Activated CD4-positive, alpha-beta T cell treated with anti-CD3 and anti-CD28 coated beads for 36 hours (primary cell): ENCODE measurements at regions of chr19 and their contacts with region 1.

Region 1: DNA sequence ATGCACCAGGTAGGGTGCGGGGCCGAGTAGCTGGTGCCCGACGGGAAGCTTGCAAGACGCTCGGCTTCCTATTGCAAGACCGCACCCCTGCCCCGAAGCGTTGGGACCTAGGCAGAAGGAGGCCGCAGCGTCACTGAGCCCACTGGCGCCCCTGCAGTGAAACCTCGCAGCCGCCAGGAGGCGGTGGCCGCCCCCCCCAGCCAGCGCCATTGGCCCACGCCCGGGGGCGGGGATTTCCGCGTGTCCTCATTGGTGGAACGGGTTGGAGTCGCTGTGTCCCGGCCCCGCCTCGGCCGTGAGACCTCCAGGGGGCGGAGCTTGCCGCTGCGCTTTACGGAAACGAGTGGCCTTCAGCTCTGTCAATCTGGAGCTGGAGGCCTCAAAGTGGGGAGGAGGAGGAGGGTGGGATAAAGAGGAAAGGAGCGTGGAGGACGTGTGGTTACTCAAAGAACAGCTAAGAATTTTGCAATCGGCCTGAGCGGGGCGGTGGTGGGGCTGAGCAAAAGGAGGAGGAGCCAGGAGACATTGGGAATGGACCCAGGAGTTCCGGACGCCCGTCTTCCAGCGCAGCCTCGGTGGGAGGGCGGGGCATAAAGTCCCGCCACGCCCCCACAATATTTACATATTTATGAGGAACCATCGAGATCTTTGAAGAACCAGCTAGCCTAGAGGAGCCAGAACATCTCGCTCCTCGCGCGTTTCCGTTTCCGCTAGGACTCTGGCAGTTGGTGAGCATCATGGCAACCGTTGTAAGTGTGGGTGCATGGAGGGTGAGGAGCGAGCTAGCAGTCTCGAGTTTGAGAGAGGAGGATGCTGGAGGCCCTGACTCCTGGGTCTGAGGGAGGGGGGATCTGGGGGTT is at the starts of genes GYS1 and RUVBL2:
- DNase-seq: peak; percentile 100
- ATAC-seq: peak; percentile 95
- H3K4me3 Mint-ChIP-seq: peak within 1 kb of the TSS; percentile 100
- H3K27ac Mint-ChIP-seq: peak within 1 kb of the TSS; percentile 97
- H3K4me1 Mint-ChIP-seq: peaks cover 41% of the 10 kb centered on the region
- H3K27me3 Mint-ChIP-seq: no peaks in the 10 kb centered on the region
- total RNA-seq, gene GYS1: 80.2 to 102 TPM
- total RNA-seq, gene RUVBL2: 155 to 178 TPM

Region 2: GRCh38 chr19:47848823-47849473 is 1144.5 kb before region 1 on chr19:
- CTCF ChIA-PET with region 1: no interaction called
- POLR2A ChIA-PET with region 1: no interaction called
- intact Hi-C with region 1: no loop called
- DNase-seq: peak; percentile 79
- ATAC-seq: peak; percentile 19
- H3K4me3 Mint-ChIP-seq: peak overlapping the region; percentile 47
- H3K27ac Mint-ChIP-seq: no peak overlapping the region
- H3K4me1 Mint-ChIP-seq: peaks cover 8% of the 10 kb centered on the region
- H3K27me3 Mint-ChIP-seq: peaks cover 40% of the 10 kb centered on the region

Region 3: DNA sequence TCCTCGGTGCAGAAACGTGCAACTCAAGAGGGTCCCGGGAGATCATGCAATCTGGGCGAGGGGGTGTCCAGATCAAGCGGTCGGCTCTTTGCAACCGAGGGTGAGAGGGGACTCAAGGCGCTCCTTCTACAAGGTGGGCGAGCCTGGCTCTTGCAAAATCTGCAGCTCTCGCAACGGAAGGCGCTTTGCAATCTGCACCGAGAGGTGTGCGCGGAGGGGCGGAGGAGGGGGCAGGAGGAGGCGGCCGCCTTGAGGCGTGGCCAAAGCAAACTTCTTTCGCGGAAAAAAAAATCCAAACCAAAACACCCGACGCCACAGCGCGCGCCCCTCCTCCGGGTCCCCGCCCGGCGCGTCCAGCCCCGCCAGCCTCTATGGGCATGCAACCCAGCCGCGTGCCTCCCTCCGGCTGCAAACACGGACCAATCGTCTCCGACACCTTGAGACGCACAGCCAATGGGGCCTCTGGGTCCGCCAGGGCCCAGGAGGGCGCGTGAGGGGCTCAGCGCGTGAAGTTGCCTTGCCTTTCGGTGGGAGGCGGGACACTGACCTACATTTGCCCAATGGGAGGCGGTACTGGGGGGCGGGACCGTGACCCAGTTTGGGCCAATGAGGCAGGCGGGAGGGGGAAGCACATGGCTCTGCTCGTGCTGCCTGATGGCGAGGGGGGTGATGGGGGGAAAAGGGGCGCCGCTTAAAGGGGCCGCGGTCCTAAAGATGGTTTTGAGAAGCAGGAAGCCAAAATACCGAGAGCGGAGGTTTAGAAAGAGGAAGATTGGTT is 356.0 kb before region 1 on chr19 and contains the start of gene DBP:
- CTCF ChIA-PET with region 1: no interaction called
- POLR2A ChIA-PET with region 1: no interaction called
- intact Hi-C with region 1: loop called in 1 of 2 experiments (anchors 1 kb)
- DNase-seq: peak; percentile 98
- ATAC-seq: peak; percentile 75
- H3K4me3 Mint-ChIP-seq: peak within 1 kb of the TSS; percentile 83
- H3K27ac Mint-ChIP-seq: peak within 1 kb of the TSS; percentile 99
- H3K4me1 Mint-ChIP-seq: peaks cover 55% of the 10 kb centered on the region
- H3K27me3 Mint-ChIP-seq: no peaks in the 10 kb centered on the region
- total RNA-seq, gene DBP: 8.3 to 12.4 TPM

Region 4: DNA sequence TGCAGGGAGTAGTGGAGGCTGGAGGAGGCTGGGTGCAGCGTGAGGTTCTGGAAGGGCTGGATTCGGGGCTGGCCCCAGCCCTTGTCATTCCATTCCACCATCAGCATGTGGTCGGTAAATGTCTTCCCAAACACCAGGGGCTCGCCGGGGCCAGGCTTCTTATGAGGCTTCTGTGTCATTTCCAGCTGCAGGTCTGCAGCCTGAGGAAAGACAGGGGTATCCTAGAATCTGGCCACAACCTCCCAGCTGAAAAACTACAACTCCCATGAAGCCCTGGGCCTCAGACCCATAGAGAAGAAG is 186.9 kb before region 1 on chr19:
- CTCF ChIA-PET with region 1: interaction called, 4 read pairs
- POLR2A ChIA-PET with region 1: interaction called, 6 read pairs
- intact Hi-C with region 1: loop called in 1 of 2 experiments (anchors 1 kb)
- DNase-seq: peak; percentile 66
- ATAC-seq: peak; percentile 65
- H3K4me3 Mint-ChIP-seq: no peak overlapping the region
- H3K27ac Mint-ChIP-seq: no peak overlapping the region
- H3K4me1 Mint-ChIP-seq: peaks cover 18% of the 10 kb centered on the region
- H3K27me3 Mint-ChIP-seq: no peaks in the 10 kb centered on the region

Region 5: DNA sequence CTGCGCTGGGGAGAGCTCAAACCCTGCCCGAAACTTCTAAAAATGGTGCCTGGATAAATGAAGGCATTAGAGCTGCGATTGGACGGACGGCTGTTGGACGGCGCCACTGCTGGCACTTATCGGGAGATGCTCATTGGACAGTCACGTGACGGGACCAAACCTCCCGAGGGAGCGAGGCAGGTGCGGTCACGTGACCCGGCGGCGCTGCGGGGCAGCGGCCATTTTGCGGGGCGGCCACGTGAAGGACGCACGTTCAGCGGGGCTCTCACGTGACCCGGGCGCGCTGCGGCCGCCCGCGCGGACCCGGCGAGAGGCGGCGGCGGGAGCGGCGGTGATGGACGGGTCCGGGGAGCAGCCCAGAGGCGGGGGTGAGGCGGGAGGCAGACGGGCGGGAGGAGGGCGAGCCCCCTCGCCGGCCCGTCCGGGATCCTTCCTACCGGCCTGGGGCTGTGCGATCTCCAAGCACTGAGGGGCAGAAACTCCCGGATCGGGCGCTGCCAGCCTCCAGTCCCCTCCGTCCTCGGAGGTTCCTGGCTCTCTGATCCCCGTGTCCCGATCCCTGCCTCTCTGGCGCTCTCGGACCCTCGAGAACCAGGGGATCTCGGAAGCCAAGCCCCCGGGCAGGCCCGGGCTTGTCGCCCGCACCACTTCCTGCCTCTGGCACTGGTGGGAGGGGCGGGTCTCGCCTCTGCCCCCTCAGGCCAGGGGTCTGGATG is 38.7 kb before region 1 on chr19 and contains the start of gene BAX:
- CTCF ChIA-PET with region 1: interaction called, 4 read pairs
- POLR2A ChIA-PET with region 1: no interaction called
- intact Hi-C with region 1: loop called in 1 of 2 experiments (anchors 1 kb)
- DNase-seq: peak; percentile 98
- ATAC-seq: peak; percentile 89
- H3K4me3 Mint-ChIP-seq: peak within 1 kb of the TSS; percentile 74
- H3K27ac Mint-ChIP-seq: peak within 1 kb of the TSS; percentile 87
- H3K4me1 Mint-ChIP-seq: peaks cover 26% of the 10 kb centered on the region
- H3K27me3 Mint-ChIP-seq: no peaks in the 10 kb centered on the region
- total RNA-seq, gene BAX: 128 to 143 TPM

Region 6: GRCh38 chr19:49017666-49018351 is 24.4 kb after region 1 on chr19:
- CTCF ChIA-PET with region 1: interaction called, 18 read pairs
- POLR2A ChIA-PET with region 1: interaction called, 3 read pairs
- intact Hi-C with region 1: no loop called
- DNase-seq: peak; percentile 80
- ATAC-seq: peak; percentile 76
- H3K4me3 Mint-ChIP-seq: peak overlapping the region; percentile 76
- H3K27ac Mint-ChIP-seq: no peak overlapping the region
- H3K4me1 Mint-ChIP-seq: peaks cover 16% of the 10 kb centered on the region
- H3K27me3 Mint-ChIP-seq: peaks cover 6% of the 10 kb centered on the region

Region 7: DNA sequence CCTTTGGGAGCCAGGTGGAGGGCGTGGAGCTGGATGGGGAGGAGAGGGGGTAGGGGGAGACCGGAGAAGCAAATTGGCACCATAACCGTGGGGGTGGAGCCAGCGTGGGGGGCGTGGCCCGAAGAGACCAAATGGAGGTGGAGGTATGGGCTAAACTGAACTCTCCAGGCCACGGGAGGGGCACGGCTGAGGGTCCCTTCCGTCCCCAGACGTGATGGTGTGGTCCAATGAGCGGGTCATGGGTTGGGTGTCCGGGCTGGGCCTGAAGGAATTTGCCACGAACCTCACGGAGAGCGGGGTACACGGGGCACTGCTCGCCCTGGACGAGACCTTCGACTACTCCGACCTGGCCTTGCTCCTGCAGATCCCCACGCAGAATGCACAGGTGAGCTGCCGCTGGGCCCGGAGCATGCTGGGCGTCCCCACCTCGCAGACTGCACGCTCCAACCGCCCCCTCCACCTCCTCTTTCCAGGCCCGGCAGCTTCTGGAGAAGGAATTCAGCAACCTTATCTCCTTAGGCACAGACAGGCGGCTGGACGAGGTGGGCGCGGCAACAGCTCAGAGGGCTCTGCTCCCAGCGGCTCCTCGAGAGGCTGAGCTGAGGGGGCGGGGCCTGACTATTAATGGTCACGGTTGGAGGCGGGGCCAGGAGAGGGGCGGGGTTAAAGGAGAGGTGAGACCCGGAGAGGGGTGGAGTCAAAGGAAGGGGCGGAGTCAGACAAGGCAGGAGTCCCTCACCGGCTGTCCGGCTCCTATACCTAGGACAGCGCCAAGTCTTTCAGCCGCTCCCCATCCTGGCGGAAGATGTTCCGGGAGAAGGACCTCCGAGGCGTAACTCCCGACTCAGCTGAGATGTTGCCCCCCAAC is 155.6 kb after region 1 on chr19:
- CTCF ChIA-PET with region 1: interaction called, 7 read pairs
- POLR2A ChIA-PET with region 1: no interaction called
- intact Hi-C with region 1: loop called (anchors 1 to 10 kb)
- DNase-seq: peak; percentile 93
- ATAC-seq: peak; percentile 53
- H3K4me3 Mint-ChIP-seq: peak overlapping the region; percentile 67
- H3K27ac Mint-ChIP-seq: no peak overlapping the region
- H3K4me1 Mint-ChIP-seq: peaks cover 28% of the 10 kb centered on the region
- H3K27me3 Mint-ChIP-seq: peaks cover 58% of the 10 kb centered on the region

Region 8: GRCh38 chr19:49244256-49244655 is 250.9 kb after region 1 on chr19:
- CTCF ChIA-PET with region 1: no interaction called
- POLR2A ChIA-PET with region 1: no interaction called
- intact Hi-C with region 1: no loop called
- DNase-seq: no peak
- ATAC-seq: no peak
- H3K4me3 Mint-ChIP-seq: no peak overlapping the region
- H3K27ac Mint-ChIP-seq: no peak overlapping the region
- H3K4me1 Mint-ChIP-seq: no peaks in the 10 kb centered on the region
- H3K27me3 Mint-ChIP-seq: peaks cover 4% of the 10 kb centered on the region

Region 9: GRCh38 chr19:49676690-49677231 is 683.4 kb after region 1 on chr19:
- CTCF ChIA-PET with region 1: no interaction called
- POLR2A ChIA-PET with region 1: no interaction called
- intact Hi-C with region 1: loop called in 1 of 2 experiments (anchors 5 kb)
- DNase-seq: peak; percentile 100
- ATAC-seq: peak; percentile 77
- H3K4me3 Mint-ChIP-seq: peak overlapping the region; percentile 94
- H3K27ac Mint-ChIP-seq: peak overlapping the region; percentile 99
- H3K4me1 Mint-ChIP-seq: peaks cover 39% of the 10 kb centered on the region
- H3K27me3 Mint-ChIP-seq: no peaks in the 10 kb centered on the region